Vagina (tissue), 2 donors: ENCODE measurements at regions of chr19 and their contacts with region 1.

Region 1: GRCh38 chr19:1026189-1027019 is at the start of gene CNN2:
- DNase-seq: no peak
- H3K4me3 ChIP-seq: peak within 1 kb of the TSS; percentile 68 to 89
- H3K27ac ChIP-seq: peak within 1 kb of the TSS; percentile 94
- H3K4me1 ChIP-seq: peaks cover 52% of the 10 kb centered on the region
- H3K27me3 ChIP-seq: no peaks in the 10 kb centered on the region
- CTCF ChIP-seq: no peak
- POLR2A ChIP-seq: peak in 1 of 2 donors; percentile 93
- total RNA-seq, gene CNN2: 76.1 TPM

Region 2: DNA sequence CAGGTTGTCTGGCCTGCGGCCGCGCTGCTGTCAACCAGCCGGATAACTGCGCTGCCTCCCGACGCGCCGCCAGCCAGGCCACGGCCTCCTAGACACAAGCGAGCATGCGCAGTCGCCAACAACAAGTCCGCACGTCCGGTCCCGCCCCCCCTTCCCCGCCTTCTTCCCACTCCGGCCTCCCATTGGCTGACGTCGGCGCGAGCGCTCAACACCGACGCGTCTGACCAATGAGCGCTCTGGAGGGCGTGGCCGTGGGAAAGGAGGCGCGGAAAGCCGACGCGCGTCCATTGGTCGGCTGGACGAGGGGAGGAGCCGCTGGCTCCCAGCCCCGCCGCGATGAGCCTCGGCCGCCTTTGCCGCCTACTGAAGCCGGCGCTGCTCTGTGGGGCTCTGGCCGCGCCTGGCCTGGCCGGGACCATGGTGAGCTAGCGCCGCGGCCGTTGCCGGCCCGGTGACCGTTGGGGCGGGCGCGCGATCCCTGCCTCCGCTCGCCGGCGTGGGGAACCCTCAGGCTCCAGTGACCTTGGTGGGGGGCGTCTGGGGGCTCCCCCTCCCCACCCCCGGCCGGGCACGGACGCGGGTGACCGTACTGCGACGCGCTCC is 77.4 kb after region 1 on chr19 and contains the start of gene GPX4:
- intact Hi-C with region 1: loop called (anchors 5 kb)
- DNase-seq: peak; percentile 99
- H3K4me3 ChIP-seq: peak within 1 kb of the TSS; percentile 86 to 92
- H3K27ac ChIP-seq: peak within 1 kb of the TSS; percentile 99
- H3K4me1 ChIP-seq: peaks cover 66% of the 10 kb centered on the region
- H3K27me3 ChIP-seq: no peaks in the 10 kb centered on the region
- CTCF ChIP-seq: no peak
- POLR2A ChIP-seq: peak; percentile 14 to 89
- total RNA-seq, gene GPX4: 524 TPM